Right ventricle myocardium inferior (tissue), 1 donor: ENCODE measurements at regions of chr2 and their contacts with region 1.

Region 1: GRCh38 chr2:19178175-19178574 is 180.2 kb downstream of the OSR1 start:
- DNase-seq: no peak
- ATAC-seq: peak; percentile 94

Region 2: GRCh38 chr2:19120941-19121750 is 57.0 kb before region 1 on chr2:
- intact Hi-C with region 1: no loop called
- DNase-seq: no peak
- ATAC-seq: peak; percentile 90

Region 3: DNA sequence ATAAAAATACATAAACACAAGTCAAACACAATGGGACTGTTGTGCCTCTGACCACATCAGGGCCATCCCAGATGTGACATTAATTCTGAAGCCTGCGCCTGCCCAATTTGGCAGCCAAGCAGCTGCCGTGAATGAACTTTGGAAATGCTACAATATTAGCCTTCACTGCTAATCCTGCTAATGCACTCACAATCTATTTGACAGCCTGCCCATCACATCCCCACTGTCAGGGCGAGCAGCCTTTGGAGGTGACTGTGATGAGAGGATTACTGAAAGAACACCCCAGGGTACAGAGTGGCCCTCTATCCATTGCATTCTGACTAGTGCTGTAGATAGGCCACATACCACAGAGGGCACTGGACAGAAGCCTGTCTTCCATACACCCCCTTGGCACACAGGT is 158.6 kb after region 1 on chr2:
- intact Hi-C with region 1: loop called (anchors 2 kb)
- DNase-seq: no peak
- ATAC-seq: peak; percentile 97